ENCODE measurements at regions of chr6 and their contacts with region 1.

Region 1: GRCh38 chr6:160455541-160456213 is 107.5 kb downstream of the SLC22A3 start:
- DNase-seq: peak; percentile 77
- H3K4me3 ChIP-seq: no peak overlapping the region
- H3K27ac ChIP-seq: peak overlapping the region; percentile 6 to 73
- H3K4me1 ChIP-seq: no peaks in the 10 kb centered on the region
- H3K27me3 ChIP-seq: no peaks in the 10 kb centered on the region
- CTCF ChIP-seq: peak; percentile 96 to 98 (median 96)
- POLR2A ChIP-seq: no peak

Region 2: GRCh38 chr6:159862103-159862502 is 593.6 kb before region 1 on chr6:
- intact Hi-C with region 1: loop called (anchors 10 kb)
- DNase-seq: no peak
- H3K4me3 ChIP-seq: no peak overlapping the region
- H3K27ac ChIP-seq: no peak overlapping the region
- H3K4me1 ChIP-seq: peaks cover 3% of the 10 kb centered on the region
- H3K27me3 ChIP-seq: no peaks in the 10 kb centered on the region
- CTCF ChIP-seq: no peak
- POLR2A ChIP-seq: no peak

Region 3: DNA sequence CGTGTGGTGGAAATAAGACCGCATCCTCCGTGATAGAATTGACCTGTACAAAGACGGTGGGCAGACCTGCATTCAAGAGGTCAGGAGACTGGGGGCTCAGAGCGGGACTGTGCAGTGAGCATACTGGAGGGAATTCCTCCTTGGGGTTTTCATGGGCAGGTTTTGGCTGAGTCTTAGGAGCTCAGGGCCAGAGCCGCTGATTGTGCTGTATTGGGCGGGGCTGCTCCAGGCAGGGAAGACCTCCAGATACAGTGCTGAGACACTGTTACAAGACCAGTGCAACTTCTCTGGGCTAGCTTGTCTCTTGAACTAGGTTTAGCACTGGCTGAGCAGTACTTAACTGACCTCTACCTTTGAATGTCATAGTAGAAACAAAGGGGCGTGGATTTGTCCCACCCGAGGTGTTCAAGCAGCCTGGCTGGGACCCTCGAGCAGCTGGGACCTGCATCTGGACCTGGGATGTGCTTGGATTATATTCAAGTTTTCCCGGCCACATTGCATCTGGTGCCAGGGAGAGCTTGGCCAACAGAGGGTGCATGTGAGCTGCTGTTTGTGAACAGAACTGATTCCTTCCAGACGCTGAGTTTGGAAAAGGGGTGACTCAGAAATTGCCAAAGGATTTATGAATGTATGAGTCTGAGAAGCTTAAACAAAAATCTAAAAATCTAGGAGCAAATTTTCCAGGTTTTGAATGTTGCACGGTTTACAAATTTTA is 367.5 kb before region 1 on chr6:
- intact Hi-C with region 1: loop called (anchors 5 kb)
- DNase-seq: peak; percentile 78
- H3K4me3 ChIP-seq: no peak overlapping the region
- H3K27ac ChIP-seq: no peak overlapping the region
- H3K4me1 ChIP-seq: no peaks in the 10 kb centered on the region
- H3K27me3 ChIP-seq: no peaks in the 10 kb centered on the region
- CTCF ChIP-seq: peak; percentile 53 to 70 (median 68)
- POLR2A ChIP-seq: no peak

Region 4: DNA sequence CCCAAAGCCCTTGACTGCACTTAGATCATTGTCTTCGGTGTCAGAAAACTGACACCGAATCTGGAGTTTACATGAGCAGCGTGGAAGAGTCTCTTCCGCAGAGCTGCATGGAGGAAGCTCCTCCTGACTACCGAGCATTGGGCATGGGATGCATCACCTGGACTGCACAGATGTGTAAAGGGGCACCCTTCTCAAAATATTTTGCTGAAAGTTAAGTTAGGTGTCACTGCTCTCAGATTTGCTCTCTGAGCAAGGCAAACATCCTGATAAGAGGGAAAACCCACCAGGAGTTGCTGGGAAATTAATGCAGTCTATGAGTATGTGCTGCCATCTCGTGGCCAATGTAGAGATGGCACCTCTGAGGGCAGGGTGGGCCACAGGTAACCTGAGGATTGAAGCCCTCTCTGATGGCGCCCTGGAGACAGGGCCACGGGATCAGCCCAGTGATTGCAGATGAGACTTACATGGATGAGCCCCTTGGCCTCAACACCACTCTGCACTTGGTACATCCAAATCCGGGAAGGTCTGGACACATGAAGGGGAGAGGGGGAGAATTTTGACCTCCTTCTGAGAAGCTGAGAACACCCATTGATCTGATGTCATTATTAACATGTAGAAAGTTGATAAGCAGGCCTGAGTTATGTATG is 78.5 kb after region 1 on chr6:
- intact Hi-C with region 1: loop called (anchors 2 kb)
- DNase-seq: peak; percentile 74
- H3K4me3 ChIP-seq: no peak overlapping the region
- H3K27ac ChIP-seq: no peak overlapping the region
- H3K4me1 ChIP-seq: no peaks in the 10 kb centered on the region
- H3K27me3 ChIP-seq: no peaks in the 10 kb centered on the region
- CTCF ChIP-seq: peak; percentile 83 to 92 (median 85)
- POLR2A ChIP-seq: no peak